A549 (cell line): ENCODE measurements at regions of chr21 and their contacts with region 1.

Region 1: GRCh38 chr21:42220138-42220701 is 1.3 kb downstream of the ABCG1 start:
- DNase-seq: peak; percentile 40 to 70
- ATAC-seq: peak; percentile 68 to 73
- H3K4me3 ChIP-seq: peak overlapping the region; percentile 70
- H3K27ac ChIP-seq: peak overlapping the region; percentile 73 to 84
- H3K4me1 ChIP-seq: peaks cover 4% of the 10 kb centered on the region; the same call in 2 of the 3 replicates
- CTCF ChIP-seq: no peak
- EP300 ChIP-seq: no peak
- POLR2A ChIP-seq: no peak
- RAD21 ChIP-seq: no peak

Region 2: GRCh38 chr21:42233067-42233961 is 13.1 kb after region 1 on chr21:
- CTCF ChIA-PET with region 1: interaction called, 4 read pairs
- POLR2A ChIA-PET with region 1: interaction called, 23 read pairs
- DNase-seq: peak in 1 of 2 experiments; percentile 21
- ATAC-seq: peak in 1 of 2 experiments; percentile 33; a peak in 1 of 6 replicates
- H3K4me3 ChIP-seq: no peak overlapping the region
- H3K27ac ChIP-seq: peak overlapping the region; percentile 74 to 91; a peak in 5 of 6 replicates
- H3K4me1 ChIP-seq: peaks cover 29% of the 10 kb centered on the region
- CTCF ChIP-seq: no peak
- EP300 ChIP-seq: no peak
- POLR2A ChIP-seq: no peak
- RAD21 ChIP-seq: no peak

Region 3: GRCh38 chr21:42289926-42290325 is 69.7 kb after region 1 on chr21:
- CTCF ChIA-PET with region 1: no interaction called
- POLR2A ChIA-PET with region 1: no interaction called
- DNase-seq: no peak
- ATAC-seq: no peak
- H3K4me3 ChIP-seq: no peak overlapping the region
- H3K27ac ChIP-seq: no peak overlapping the region
- H3K4me1 ChIP-seq: no peaks in the 10 kb centered on the region
- CTCF ChIP-seq: no peak
- EP300 ChIP-seq: no peak
- POLR2A ChIP-seq: no peak
- RAD21 ChIP-seq: no peak